Naive thymus-derived CD4-positive, alpha-beta T cell (primary cell): ENCODE measurements at regions of chr17 and their contacts with region 1.

Region 1: GRCh38 chr17:74961657-74962490 is 10.7 kb downstream of the HID1 start:
- DNase-seq: peak; percentile 69 to 88 (median 78)
- ATAC-seq: peak; percentile 80
- H3K4me3 ChIP-seq: no peak overlapping the region
- H3K4me3 Mint-ChIP-seq: peak overlapping the region in 2 of 10 donors; percentile 14 to 33
- H3K27ac ChIP-seq: no peak overlapping the region
- H3K27ac Mint-ChIP-seq: no peak overlapping the region
- H3K4me1 ChIP-seq: peaks cover 0 to 4% of the 10 kb centered on the region in 2 donors
- H3K4me1 Mint-ChIP-seq: peaks cover 0 to 8% (median 5%) of the 10 kb centered on the region in 7 donors
- H3K27me3 ChIP-seq: no peaks in the 10 kb centered on the region
- H3K27me3 Mint-ChIP-seq: peaks cover 0 to 3% (median 0%) of the 10 kb centered on the region in 5 donors

Region 2: DNA sequence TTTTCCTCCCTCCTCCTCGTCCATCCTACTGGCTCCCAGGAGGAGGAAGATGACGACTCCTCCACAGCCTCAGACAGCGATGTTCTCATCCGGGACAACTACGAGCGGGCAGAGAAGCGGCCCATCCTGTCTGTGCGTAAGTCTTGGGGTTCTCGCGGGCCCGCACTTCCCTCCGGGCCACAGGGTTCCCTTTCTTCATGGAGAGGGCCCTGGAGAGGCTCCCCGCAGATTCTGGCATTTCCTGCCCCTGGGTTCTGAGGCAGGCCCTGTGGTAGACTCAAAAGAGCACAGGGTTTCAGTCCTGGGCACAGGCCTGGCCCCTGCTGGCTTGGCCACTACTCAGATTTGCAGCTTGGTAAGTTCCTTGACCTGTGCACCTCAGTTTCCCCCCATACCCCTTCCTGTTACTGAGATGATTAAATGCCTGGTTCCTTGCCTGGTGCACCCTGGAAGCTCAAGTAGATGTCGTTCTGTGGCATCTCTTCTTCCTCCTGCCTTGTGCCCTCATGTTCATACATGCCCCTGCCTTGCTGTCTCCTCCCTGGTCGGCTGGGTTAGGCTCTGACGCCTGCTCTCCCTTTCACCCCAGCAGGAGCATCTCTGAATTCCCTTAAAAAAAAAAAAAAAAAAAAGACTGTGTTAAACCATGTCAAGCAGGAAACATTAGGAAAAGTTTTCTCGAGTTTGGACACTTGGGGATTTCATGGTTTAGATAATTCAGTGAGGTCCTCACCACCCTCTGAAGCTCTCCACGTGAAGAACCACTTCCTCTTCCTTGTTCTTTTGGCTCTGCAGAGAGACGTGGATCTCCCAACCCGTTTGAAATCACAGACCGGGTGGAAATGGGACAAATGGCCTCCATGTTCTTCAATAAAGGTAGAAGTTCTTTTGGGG is 171.5 kb before region 1 on chr17:
- CTCF ChIA-PET with region 1: interaction called, 6 read pairs
- POLR2A ChIA-PET with region 1: no interaction called
- intact Hi-C with region 1: loop called (anchors 1 to 5 kb)
- DNase-seq: peak in 2 of 9 donors; percentile 24
- ATAC-seq: no peak
- H3K4me3 ChIP-seq: no peak overlapping the region
- H3K4me3 Mint-ChIP-seq: peak overlapping the region; percentile 41 to 81 (median 72)
- H3K27ac ChIP-seq: peak overlapping the region; percentile 19
- H3K27ac Mint-ChIP-seq: peak overlapping the region; percentile 48 to 88 (median 81)
- H3K4me1 ChIP-seq: peaks cover 13 to 39% of the 10 kb centered on the region in 2 donors
- H3K4me1 Mint-ChIP-seq: peaks cover 28 to 64% (median 46%) of the 10 kb centered on the region in 7 donors
- H3K27me3 ChIP-seq: no peaks in the 10 kb centered on the region
- H3K27me3 Mint-ChIP-seq: no peaks in the 10 kb centered on the region

Region 3: GRCh38 chr17:74842599-74843351 is 119.1 kb before region 1 on chr17:
- CTCF ChIA-PET with region 1: no interaction called
- POLR2A ChIA-PET with region 1: no interaction called
- intact Hi-C with region 1: no loop called
- DNase-seq: no peak
- ATAC-seq: peak; percentile 75
- H3K4me3 ChIP-seq: no peak overlapping the region
- H3K4me3 Mint-ChIP-seq: peak overlapping the region in 1 of 10 donors; percentile 41
- H3K27ac ChIP-seq: no peak overlapping the region
- H3K27ac Mint-ChIP-seq: no peak overlapping the region
- H3K4me1 ChIP-seq: no peaks in the 10 kb centered on the region
- H3K4me1 Mint-ChIP-seq: peaks cover 8 to 23% (median 20%) of the 10 kb centered on the region in 7 donors
- H3K27me3 ChIP-seq: no peaks in the 10 kb centered on the region
- H3K27me3 Mint-ChIP-seq: peaks cover 4 to 26% (median 9%) of the 10 kb centered on the region in 5 donors

Region 4: DNA sequence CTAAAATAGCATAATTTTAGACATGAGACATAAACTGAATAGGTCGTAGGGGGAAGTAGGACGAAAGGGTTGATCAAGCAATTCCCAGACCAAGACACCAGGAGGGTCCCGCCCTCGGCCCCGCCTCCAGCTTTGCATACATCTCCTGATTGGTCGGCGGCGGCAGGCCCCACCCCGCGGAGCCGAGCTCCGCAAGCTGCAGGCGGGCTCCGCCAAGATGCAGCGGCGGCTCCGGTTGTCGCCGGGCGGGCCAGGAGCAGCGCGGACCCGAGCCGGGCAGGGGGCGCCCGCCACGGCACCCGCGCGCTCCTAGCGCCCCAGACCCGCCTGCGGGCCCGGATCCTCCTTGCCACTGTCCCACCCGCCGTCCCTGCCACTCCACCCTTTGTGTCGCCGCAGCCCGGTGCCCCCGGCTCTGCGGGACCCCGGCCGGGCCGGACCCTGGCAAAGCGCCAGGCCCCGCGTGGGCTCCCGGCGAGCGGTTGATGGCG is 25.6 kb after region 1 on chr17 and contains the start of gene CDR2L:
- CTCF ChIA-PET with region 1: interaction called, 15 read pairs
- POLR2A ChIA-PET with region 1: interaction called, 3 read pairs
- intact Hi-C with region 1: loop called (anchors 1 to 2 kb)
- DNase-seq: peak; percentile 87 to 94 (median 90)
- ATAC-seq: peak; percentile 98
- H3K4me3 ChIP-seq: peak within 1 kb of the TSS; percentile 44
- H3K4me3 Mint-ChIP-seq: peak within 1 kb of the TSS; percentile 84 to 94 (median 89)
- H3K27ac ChIP-seq: peak within 1 kb of the TSS; percentile 8
- H3K27ac Mint-ChIP-seq: peak within 1 kb of the TSS in 8 of 9 donors; percentile 10 to 83 (median 66)
- H3K4me1 ChIP-seq: peaks cover 6 to 14% of the 10 kb centered on the region in 2 donors
- H3K4me1 Mint-ChIP-seq: peaks cover 5 to 15% (median 10%) of the 10 kb centered on the region in 7 donors
- H3K27me3 ChIP-seq: no peaks in the 10 kb centered on the region
- H3K27me3 Mint-ChIP-seq: peaks cover 0 to 59% (median 0%) of the 10 kb centered on the region in 5 donors
- total RNA-seq, gene CDR2L: 0.08 to 0.17 (median 0.16) TPM in 3 of 5 experiments, not detected in the others

Region 5: GRCh38 chr17:75034236-75034908 is 72.5 kb after region 1 on chr17:
- CTCF ChIA-PET with region 1: interaction called, 6 read pairs
- POLR2A ChIA-PET with region 1: interaction called, 4 read pairs
- intact Hi-C with region 1: loop called (anchors 1 to 2 kb)
- DNase-seq: peak; percentile 63 to 95 (median 77)
- ATAC-seq: peak; percentile 37
- H3K4me3 ChIP-seq: peak overlapping the region; percentile 72
- H3K4me3 Mint-ChIP-seq: peak overlapping the region; percentile 85 to 97 (median 94)
- H3K27ac ChIP-seq: peak overlapping the region; percentile 77
- H3K27ac Mint-ChIP-seq: peak overlapping the region; percentile 95 to 100 (median 99)
- H3K4me1 ChIP-seq: peaks cover 36 to 40% of the 10 kb centered on the region in 2 donors
- H3K4me1 Mint-ChIP-seq: peaks cover 26 to 73% (median 58%) of the 10 kb centered on the region in 7 donors
- H3K27me3 ChIP-seq: no peaks in the 10 kb centered on the region
- H3K27me3 Mint-ChIP-seq: peaks cover 0 to 10% (median 0%) of the 10 kb centered on the region in 5 donors

Region 6: GRCh38 chr17:75173526-75173925 is 211.7 kb after region 1 on chr17:
- CTCF ChIA-PET with region 1: interaction called, 27 read pairs
- POLR2A ChIA-PET with region 1: no interaction called
- intact Hi-C with region 1: loop called in 1 of 2 experiments (anchors 1 kb)
- DNase-seq: no peak
- ATAC-seq: no peak
- H3K4me3 ChIP-seq: no peak overlapping the region
- H3K4me3 Mint-ChIP-seq: no peak overlapping the region
- H3K27ac ChIP-seq: no peak overlapping the region
- H3K27ac Mint-ChIP-seq: peak overlapping the region in 3 of 9 donors; percentile 16 to 51 (median 31)
- H3K4me1 ChIP-seq: peaks cover 0 to 3% of the 10 kb centered on the region in 2 donors
- H3K4me1 Mint-ChIP-seq: peaks cover 0 to 24% (median 23%) of the 10 kb centered on the region in 7 donors
- H3K27me3 ChIP-seq: no peaks in the 10 kb centered on the region
- H3K27me3 Mint-ChIP-seq: no peaks in the 10 kb centered on the region

Region 7: DNA sequence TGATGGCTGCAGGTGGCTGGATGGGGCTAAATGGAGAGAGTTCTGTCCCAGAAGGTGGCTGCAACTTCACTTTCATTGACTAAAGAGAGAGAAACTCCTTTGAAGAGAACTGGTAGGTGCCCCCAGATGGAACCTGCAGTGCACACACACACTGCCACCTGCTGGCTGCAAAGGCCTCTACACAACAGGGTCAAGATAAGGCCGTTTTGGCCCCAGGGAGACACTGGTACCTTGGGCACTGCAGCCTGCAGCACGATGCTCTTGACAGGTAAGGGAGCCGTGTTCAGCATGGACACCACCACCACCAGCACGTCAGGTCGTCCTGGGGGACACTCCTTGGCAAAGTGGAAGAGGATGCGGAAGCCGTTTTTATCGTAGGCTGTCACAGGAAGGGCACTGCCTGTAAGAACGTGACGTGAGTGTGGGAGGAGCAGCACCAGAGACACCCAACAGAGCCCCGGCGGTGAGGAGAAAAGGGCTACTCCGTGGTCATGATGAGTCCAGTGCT is 276.9 kb after region 1 on chr17:
- CTCF ChIA-PET with region 1: no interaction called
- POLR2A ChIA-PET with region 1: no interaction called
- intact Hi-C with region 1: loop called (anchors 1 kb)
- DNase-seq: peak; percentile 33 to 60 (median 55)
- ATAC-seq: peak; percentile 83
- H3K4me3 ChIP-seq: no peak overlapping the region
- H3K4me3 Mint-ChIP-seq: peak overlapping the region in 4 of 10 donors; percentile 38 to 51 (median 46)
- H3K27ac ChIP-seq: no peak overlapping the region
- H3K27ac Mint-ChIP-seq: peak overlapping the region; percentile 7 to 93 (median 85)
- H3K4me1 ChIP-seq: peaks cover 0 to 28% of the 10 kb centered on the region in 2 donors
- H3K4me1 Mint-ChIP-seq: peaks cover 5 to 25% (median 12%) of the 10 kb centered on the region in 7 donors
- H3K27me3 ChIP-seq: no peaks in the 10 kb centered on the region
- H3K27me3 Mint-ChIP-seq: no peaks in the 10 kb centered on the region

Region 8: GRCh38 chr17:75619506-75620431 is 657.9 kb after region 1 on chr17:
- CTCF ChIA-PET with region 1: no interaction called
- POLR2A ChIA-PET with region 1: no interaction called
- intact Hi-C with region 1: no loop called
- DNase-seq: peak in 1 of 9 donors; percentile 10
- ATAC-seq: peak; percentile 17
- H3K4me3 ChIP-seq: no peak overlapping the region
- H3K4me3 Mint-ChIP-seq: no peak overlapping the region
- H3K27ac ChIP-seq: no peak overlapping the region
- H3K27ac Mint-ChIP-seq: peak overlapping the region in 1 of 9 donors; percentile 51
- H3K4me1 ChIP-seq: no peaks in the 10 kb centered on the region
- H3K4me1 Mint-ChIP-seq: peaks cover 0 to 5% (median 0%) of the 10 kb centered on the region in 7 donors
- H3K27me3 ChIP-seq: no peaks in the 10 kb centered on the region
- H3K27me3 Mint-ChIP-seq: no peaks in the 10 kb centered on the region